Caco-2 (cell line): ENCODE measurements at regions of chr14 and their contacts with region 1.

Region 1: GRCh38 chr14:96225745-96226151 is 21.1 kb downstream of the BDKRB2 start:
- DNase-seq: peak; percentile 63 to 72
- H3K4me3 ChIP-seq: no peak overlapping the region
- H3K4me3 Mint-ChIP-seq: no peak overlapping the region
- H3K27ac Mint-ChIP-seq: peak overlapping the region; percentile 48
- H3K4me1 ChIP-seq: peaks cover 16% of the 10 kb centered on the region
- H3K4me1 Mint-ChIP-seq: peaks cover 5% of the 10 kb centered on the region
- H3K27me3 ChIP-seq: no peaks in the 10 kb centered on the region
- H3K27me3 Mint-ChIP-seq: no peaks in the 10 kb centered on the region
- CTCF ChIP-seq: peak in 1 of 2 experiments; percentile 58

Region 2: GRCh38 chr14:96268431-96269358 is 42.9 kb after region 1 on chr14:
- CTCF ChIA-PET with region 1: no interaction called
- POLR2A ChIA-PET with region 1: no interaction called
- intact Hi-C with region 1: loop called (anchors 5 kb)
- DNase-seq: no peak
- H3K4me3 ChIP-seq: no peak overlapping the region
- H3K4me3 Mint-ChIP-seq: no peak overlapping the region
- H3K27ac Mint-ChIP-seq: no peak overlapping the region
- H3K4me1 ChIP-seq: 0 out of 2 replicates have a peak, but pooled peaks cover 7% of the 10 kb centered on the region
- H3K4me1 Mint-ChIP-seq: peaks cover 10% of the 10 kb centered on the region
- H3K27me3 ChIP-seq: no peaks in the 10 kb centered on the region
- H3K27me3 Mint-ChIP-seq: no peaks in the 10 kb centered on the region
- CTCF ChIP-seq: no peak

Region 3: DNA sequence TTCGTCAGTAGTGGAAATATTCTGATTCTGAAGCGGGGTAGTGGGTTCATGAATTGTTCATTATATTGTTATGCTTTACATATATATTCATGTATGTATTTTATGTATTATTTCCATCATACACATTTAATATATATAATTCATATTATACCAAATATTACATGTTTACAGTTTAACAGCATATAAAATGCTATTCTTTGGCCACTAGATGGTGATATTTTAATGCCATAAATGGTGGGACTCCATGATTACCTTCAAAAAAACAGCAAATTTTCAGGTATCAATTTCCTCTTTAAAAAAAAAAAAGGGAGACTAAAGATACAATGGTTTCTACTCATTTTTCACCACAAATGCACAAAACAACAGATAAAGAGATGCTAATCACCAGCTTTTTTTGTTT is 71.3 kb after region 1 on chr14:
- CTCF ChIA-PET with region 1: no interaction called
- POLR2A ChIA-PET with region 1: no interaction called
- intact Hi-C with region 1: no loop called
- DNase-seq: no peak
- H3K4me3 ChIP-seq: no peak overlapping the region
- H3K4me3 Mint-ChIP-seq: no peak overlapping the region
- H3K27ac Mint-ChIP-seq: no peak overlapping the region
- H3K4me1 ChIP-seq: no peaks in the 10 kb centered on the region
- H3K4me1 Mint-ChIP-seq: peaks cover 6% of the 10 kb centered on the region
- H3K27me3 ChIP-seq: no peaks in the 10 kb centered on the region
- H3K27me3 Mint-ChIP-seq: no peaks in the 10 kb centered on the region
- CTCF ChIP-seq: peak; percentile 15 to 44